Sigmoid colon (tissue), 7 donors: ENCODE measurements at regions of chr7 and their contacts with region 1.

Region 1: GRCh38 chr7:121437456-121438127 is 41.5 kb upstream of the FAM3C start:
- DNase-seq: no peak
- H3K4me3 ChIP-seq: peak overlapping the region in 3 of 4 donors; percentile 16 to 20 (median 20)
- H3K27ac ChIP-seq: peak overlapping the region; percentile 4 to 68 (median 42)
- H3K4me1 ChIP-seq: peaks cover 0 to 17% (median 14%) of the 10 kb centered on the region in 4 donors
- H3K27me3 ChIP-seq: no peaks in the 10 kb centered on the region
- CTCF ChIP-seq: no peak
- EP300 ChIP-seq: no peak
- POLR2A ChIP-seq: no peak

Region 2: DNA sequence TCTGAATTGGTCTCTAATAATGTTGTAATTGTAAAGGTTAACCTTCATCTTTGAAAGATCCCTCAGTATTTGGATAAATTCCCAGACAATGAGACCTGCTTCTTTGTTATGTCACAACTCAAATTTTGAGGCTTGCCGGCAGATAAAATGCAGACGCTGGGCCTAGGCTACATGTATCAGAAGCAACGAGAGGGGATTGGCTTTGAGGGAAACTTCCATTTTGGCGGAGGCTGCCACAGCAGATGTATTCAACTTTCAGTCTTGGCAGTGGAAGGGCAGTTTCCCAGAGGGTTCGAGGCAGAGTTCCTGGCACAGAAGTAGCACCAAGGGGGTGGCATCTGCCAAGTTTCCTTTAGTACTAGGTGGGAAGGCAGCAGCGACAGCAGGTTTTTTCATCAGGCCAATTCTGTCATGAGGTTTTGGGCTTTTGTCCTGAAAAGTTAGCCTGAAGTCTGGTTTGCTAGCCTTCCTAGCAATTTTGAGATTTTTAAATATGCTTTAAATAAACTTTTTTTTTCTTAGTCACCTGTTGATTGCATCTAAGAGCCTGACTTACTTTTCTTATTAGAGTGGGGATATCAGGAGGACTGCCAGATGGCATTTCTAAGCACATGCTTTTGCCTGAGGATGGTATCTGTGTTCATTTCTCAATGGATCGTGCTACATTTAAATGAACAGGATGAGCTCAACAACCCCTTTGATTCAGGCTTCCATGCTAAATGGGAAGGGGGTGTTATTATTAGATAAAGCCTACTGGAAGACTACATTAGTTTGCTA is 48.1 kb after region 1 on chr7:
- intact Hi-C with region 1: loop called (anchors 5 kb)
- DNase-seq: peak; percentile 65
- H3K4me3 ChIP-seq: peak overlapping the region in 1 of 4 donors; percentile 8
- H3K27ac ChIP-seq: peak overlapping the region; percentile 50 to 70 (median 64)
- H3K4me1 ChIP-seq: peaks cover 0 to 35% (median 24%) of the 10 kb centered on the region in 4 donors
- H3K27me3 ChIP-seq: no peaks in the 10 kb centered on the region
- CTCF ChIP-seq: no peak
- EP300 ChIP-seq: no peak
- POLR2A ChIP-seq: no peak